A673 (cell line): ENCODE measurements at regions of chr18 and their contacts with region 1.

Region 1: DNA sequence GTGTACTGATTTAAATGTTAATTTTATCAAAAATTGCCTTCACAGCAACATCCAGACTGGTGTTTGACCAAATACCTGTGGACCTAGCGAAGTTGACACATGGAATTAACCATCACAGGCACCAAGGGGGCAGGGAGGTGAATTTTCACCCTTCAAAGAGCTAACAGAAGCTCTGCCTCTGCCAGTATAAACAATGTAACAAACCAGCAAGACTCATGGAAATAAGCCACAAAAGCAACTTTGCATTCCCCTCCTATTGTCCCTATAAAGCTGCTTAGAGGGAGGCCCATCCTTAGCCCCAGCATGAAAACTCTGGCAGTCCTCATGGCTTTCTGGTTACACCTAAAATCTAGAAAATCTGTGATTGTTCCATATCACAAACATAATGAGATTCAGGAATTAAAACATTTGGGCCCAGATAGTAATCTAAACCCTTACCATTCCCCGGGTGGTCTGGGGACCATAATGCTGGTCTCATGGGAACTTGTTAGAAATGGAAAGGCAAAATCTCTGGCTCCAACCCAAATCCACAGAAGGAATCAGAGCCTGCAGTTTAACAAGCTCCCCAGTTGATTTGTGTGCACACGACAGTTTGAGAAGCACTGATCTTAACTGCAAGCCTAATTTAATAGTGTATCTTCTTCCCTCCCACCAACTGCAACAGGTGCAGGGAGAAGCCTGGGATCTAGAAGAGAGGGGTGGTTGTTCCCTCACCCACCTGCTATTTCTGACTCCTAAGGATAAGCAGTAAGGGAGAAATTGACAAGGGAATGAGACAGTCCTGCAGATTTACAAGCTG is 23.1 kb downstream of the SERPINB11 start:
- DNase-seq: peak; percentile 91
- H3K4me3 ChIP-seq: no peak overlapping the region
- H3K27ac ChIP-seq: peak overlapping the region; percentile 51
- H3K4me1 ChIP-seq: peaks cover 20% of the 10 kb centered on the region
- H3K27me3 ChIP-seq: no peaks in the 10 kb centered on the region
- CTCF ChIP-seq: no peak

Region 2: GRCh38 chr18:63590373-63590772 is 135.5 kb before region 1 on chr18:
- CTCF ChIA-PET with region 1: no interaction called
- POLR2A ChIA-PET with region 1: no interaction called
- intact Hi-C with region 1: loop called (anchors 5 kb)
- DNase-seq: peak; percentile 58
- H3K4me3 ChIP-seq: no peak overlapping the region
- H3K27ac ChIP-seq: peak overlapping the region; percentile 75
- H3K4me1 ChIP-seq: peaks cover 37% of the 10 kb centered on the region
- H3K27me3 ChIP-seq: no peaks in the 10 kb centered on the region
- CTCF ChIP-seq: no peak